Calu3 (cell line): ENCODE measurements at regions of chr4 and their contacts with region 1.

Region 1: DNA sequence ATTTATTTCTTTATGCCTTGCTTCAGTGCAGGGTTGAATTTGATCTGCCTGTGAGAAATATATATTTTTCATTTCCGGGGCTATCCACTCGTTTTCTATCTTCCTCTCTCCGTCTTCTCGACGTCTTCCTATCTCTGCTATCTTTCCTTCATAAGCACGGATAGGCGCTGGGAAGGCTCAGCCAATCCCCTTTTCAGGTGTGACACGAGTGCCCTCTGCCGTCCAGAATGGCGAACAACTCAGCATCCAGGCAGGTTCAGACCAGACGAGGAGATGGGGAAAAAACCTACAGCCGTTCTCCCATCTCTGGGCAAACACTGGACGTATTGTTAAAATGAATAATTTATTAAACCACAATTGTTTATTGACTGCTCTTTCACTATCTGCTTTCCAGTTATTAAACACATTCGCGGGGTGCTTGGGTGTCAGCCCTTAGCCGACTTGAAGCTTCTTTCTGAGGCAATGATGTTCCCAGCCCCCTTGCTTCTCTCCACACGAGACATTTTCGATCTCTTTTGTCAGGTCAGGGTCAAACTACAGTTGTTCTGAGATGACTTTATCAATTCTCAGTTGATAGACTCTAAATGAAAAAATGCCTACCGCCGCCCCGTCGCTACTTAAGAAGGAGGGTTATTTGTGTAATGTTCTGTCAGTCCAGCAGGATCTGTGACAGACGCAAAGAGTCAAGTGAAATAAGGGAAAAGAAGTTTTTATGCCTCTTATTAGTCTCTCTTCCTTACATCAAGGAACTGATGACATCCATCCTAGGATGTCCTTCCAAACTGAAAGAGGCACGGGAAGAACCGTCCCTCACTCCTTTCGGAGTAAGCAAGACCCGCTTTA is 96.3 kb upstream of the NOCT start:
- DNase-seq: peak; percentile 79
- H3K4me3 Mint-ChIP-seq: peak overlapping the region; percentile 64
- H3K27ac Mint-ChIP-seq: no peak overlapping the region
- H3K4me1 Mint-ChIP-seq: peaks cover 13% of the 10 kb centered on the region
- H3K27me3 Mint-ChIP-seq: no peaks in the 10 kb centered on the region
- CTCF ChIP-seq: peak; percentile 51

Region 2: GRCh38 chr4:138680989-138681604 is 238.2 kb before region 1 on chr4:
- CTCF ChIA-PET with region 1: no interaction called
- intact Hi-C with region 1: loop called (anchors 10 kb)
- DNase-seq: peak; percentile 71
- H3K4me3 Mint-ChIP-seq: no peak overlapping the region
- H3K27ac Mint-ChIP-seq: no peak overlapping the region
- H3K4me1 Mint-ChIP-seq: peaks cover 23% of the 10 kb centered on the region
- H3K27me3 Mint-ChIP-seq: no peaks in the 10 kb centered on the region
- CTCF ChIP-seq: peak; percentile 77

Region 3: DNA sequence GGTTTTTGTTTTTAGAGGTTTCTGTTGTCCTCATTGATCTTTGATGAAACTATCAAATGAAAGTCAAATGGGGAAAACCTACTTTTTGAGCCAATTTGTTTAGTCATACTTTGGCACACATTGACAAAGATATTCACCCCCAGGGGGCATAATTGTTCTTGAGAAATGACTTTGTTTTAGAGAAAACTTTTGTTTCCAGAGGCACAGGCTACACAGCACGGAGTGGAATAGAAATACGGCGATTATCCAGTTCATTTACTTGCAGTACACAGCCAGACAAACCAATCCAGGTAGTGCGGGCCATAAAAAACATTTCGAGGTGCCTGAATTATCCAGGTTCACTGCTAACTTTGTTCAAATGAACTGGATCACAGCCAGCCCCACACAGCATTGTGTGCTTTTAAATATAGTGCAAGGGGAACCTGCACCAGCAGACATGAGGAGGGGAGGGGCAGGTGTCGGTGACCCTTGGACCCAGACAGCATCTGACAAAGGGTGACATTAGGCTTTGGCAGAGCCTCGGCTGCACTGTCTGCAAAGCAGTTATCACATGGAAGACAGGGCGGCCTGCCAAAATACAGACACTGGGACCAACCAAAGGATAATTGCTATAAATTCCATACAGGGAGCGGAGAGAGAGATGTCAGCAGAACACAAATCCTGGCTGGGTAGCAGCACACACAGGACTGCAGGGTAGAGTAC is 83.3 kb before region 1 on chr4:
- CTCF ChIA-PET with region 1: no interaction called
- intact Hi-C with region 1: loop called (anchors 5 kb)
- DNase-seq: peak; percentile 9
- H3K4me3 Mint-ChIP-seq: no peak overlapping the region
- H3K27ac Mint-ChIP-seq: no peak overlapping the region
- H3K4me1 Mint-ChIP-seq: peaks cover 11% of the 10 kb centered on the region
- H3K27me3 Mint-ChIP-seq: peaks cover 25% of the 10 kb centered on the region
- CTCF ChIP-seq: no peak

Region 4: GRCh38 chr4:138870737-138871554 is 48.4 kb before region 1 on chr4:
- CTCF ChIA-PET with region 1: no interaction called
- intact Hi-C with region 1: loop called (anchors 5 kb)
- DNase-seq: peak; percentile 63
- H3K4me3 Mint-ChIP-seq: no peak overlapping the region
- H3K27ac Mint-ChIP-seq: no peak overlapping the region
- H3K4me1 Mint-ChIP-seq: peaks cover 7% of the 10 kb centered on the region
- H3K27me3 Mint-ChIP-seq: peaks cover 13% of the 10 kb centered on the region
- CTCF ChIP-seq: peak; percentile 49